H1 (cell line): ENCODE measurements at regions of chr4 and their contacts with region 1.

Region 1: GRCh38 chr4:183396227-183396637 is 48.2 kb upstream of the CDKN2AIP start:
- DNase-seq: no peak
- H3K4me3 ChIP-seq: no peak overlapping the region
- H3K27ac ChIP-seq: no peak overlapping the region
- H3K4me1 ChIP-seq: peaks cover 0 to 5% (median 3%) of the 10 kb centered on the region in 4 experiments; a peak in 4 of 7 replicates
- H3K27me3 ChIP-seq: peaks cover 0 to 9% (median 2%) of the 10 kb centered on the region in 4 experiments; a peak in 5 of 7 replicates
- CTCF ChIP-seq: no peak
- EP300 ChIP-seq: no peak
- POLR2A ChIP-seq: no peak
- RAD21 ChIP-seq: no peak

Region 2: GRCh38 chr4:183321079-183321478 is 75.2 kb before region 1 on chr4:
- CTCF ChIA-PET with region 1: no interaction called
- POLR2A ChIA-PET with region 1: no interaction called
- DNase-seq: no peak
- H3K4me3 ChIP-seq: no peak overlapping the region
- H3K27ac ChIP-seq: no peak overlapping the region
- H3K4me1 ChIP-seq: no peaks in the 10 kb centered on the region
- H3K27me3 ChIP-seq: no peaks in the 10 kb centered on the region
- CTCF ChIP-seq: no peak
- EP300 ChIP-seq: no peak
- POLR2A ChIP-seq: no peak
- RAD21 ChIP-seq: no peak

Region 3: GRCh38 chr4:183407128-183407585 is 10.9 kb after region 1 on chr4:
- CTCF ChIA-PET with region 1: interaction called, 20 read pairs
- POLR2A ChIA-PET with region 1: interaction called, 4 read pairs
- DNase-seq: peak; percentile 59 to 99
- H3K4me3 ChIP-seq: peak overlapping the region; percentile 24 to 51 (median 38); a peak in 7 of 8 replicates
- H3K27ac ChIP-seq: no peak overlapping the region
- H3K4me1 ChIP-seq: no peaks in the 10 kb centered on the region
- H3K27me3 ChIP-seq: no peaks in the 10 kb centered on the region
- CTCF ChIP-seq: peak; percentile 86 to 94 (median 88)
- EP300 ChIP-seq: peak in 1 of 2 experiments; percentile 45; a peak in 1 of 3 replicates
- POLR2A ChIP-seq: peak; percentile 38 to 78
- RAD21 ChIP-seq: peak; percentile 87 to 95